ENCODE measurements at regions of chr18 and their contacts with region 1.

Region 1: GRCh38 chr18:79252904-79253633 is 142.7 kb upstream of the NFATC1 start:
- DNase-seq: no peak
- ATAC-seq: no peak
- H3K4me3 ChIP-seq: no peak overlapping the region
- H3K27ac ChIP-seq: no peak overlapping the region
- H3K4me1 ChIP-seq: no peaks in the 10 kb centered on the region
- H3K27me3 ChIP-seq: no peaks in the 10 kb centered on the region
- CTCF ChIP-seq: no peak

Region 2: GRCh38 chr18:79275992-79276391 is 22.9 kb after region 1 on chr18:
- CTCF ChIA-PET with region 1: no interaction called
- POLR2A ChIA-PET with region 1: no interaction called
- intact Hi-C with region 1: loop called (anchors 1 kb)
- DNase-seq: peak; percentile 23
- ATAC-seq: peak; percentile 51; the same call in 1 of the 2 replicates
- H3K4me3 ChIP-seq: no peak overlapping the region
- H3K27ac ChIP-seq: no peak overlapping the region
- H3K4me1 ChIP-seq: no peaks in the 10 kb centered on the region
- H3K27me3 ChIP-seq: no peaks in the 10 kb centered on the region
- CTCF ChIP-seq: no peak

Measured in PC-3 (cell line).